WTC11 (cell line): ENCODE measurements at regions of chr2 and their contacts with region 1.

Region 1: GRCh38 chr2:51795248-51795888 is 763.4 kb upstream of the NRXN1 start:
- DNase-seq: peak; percentile 78
- ATAC-seq: peak; percentile 94
- H3K4me3 Mint-ChIP-seq: no peak overlapping the region
- H3K27ac Mint-ChIP-seq: no peak overlapping the region
- H3K4me1 Mint-ChIP-seq: peaks cover 16% of the 10 kb centered on the region
- H3K27me3 Mint-ChIP-seq: no peaks in the 10 kb centered on the region
- CTCF ChIP-seq: peak; percentile 57

Region 2: DNA sequence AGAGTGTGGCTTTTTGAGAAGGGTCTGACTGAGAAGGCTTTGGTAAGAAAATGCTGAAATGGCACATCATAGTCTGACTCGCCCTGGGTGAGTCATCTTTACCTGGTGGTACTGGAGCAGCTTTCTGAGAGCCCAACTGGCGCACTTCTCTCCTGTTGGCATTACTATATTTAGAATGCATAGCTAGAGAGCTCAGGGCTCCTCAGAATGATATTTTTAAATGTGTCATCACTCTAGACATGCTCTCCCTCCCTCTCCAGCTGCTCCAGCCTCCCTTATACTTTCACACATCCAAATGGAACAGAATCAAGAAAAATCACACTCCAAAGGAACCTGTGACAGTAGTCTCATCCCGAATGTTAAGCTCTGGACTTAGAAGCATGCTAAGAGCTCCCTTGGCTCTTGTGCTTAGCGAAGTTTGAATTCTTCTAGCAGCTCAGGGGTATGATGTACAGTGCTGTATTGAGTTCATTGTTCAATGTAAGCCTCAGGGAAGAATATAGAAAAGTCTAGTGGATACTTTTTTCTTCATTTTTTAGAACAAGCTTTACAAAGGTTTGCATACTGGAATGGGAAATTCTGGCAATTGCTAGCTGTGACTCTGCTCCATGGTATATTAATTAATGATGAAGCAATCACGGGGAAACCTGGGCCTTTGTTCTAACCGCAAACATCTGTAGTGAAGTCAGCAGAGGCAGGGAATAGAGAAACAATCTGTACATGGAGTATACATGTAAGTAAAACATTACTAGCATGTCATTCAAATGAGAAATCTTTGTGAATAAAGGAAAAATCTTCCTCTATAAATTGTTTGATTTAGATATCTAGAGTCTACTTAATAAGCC is 12.2 kb before region 1 on chr2:
- CTCF ChIA-PET with region 1: interaction called, 17 read pairs
- POLR2A ChIA-PET with region 1: no interaction called
- DNase-seq: no peak
- ATAC-seq: no peak
- H3K4me3 Mint-ChIP-seq: no peak overlapping the region
- H3K27ac Mint-ChIP-seq: no peak overlapping the region
- H3K4me1 Mint-ChIP-seq: no peaks in the 10 kb centered on the region
- H3K27me3 Mint-ChIP-seq: no peaks in the 10 kb centered on the region
- CTCF ChIP-seq: no peak